ENCODE measurements at regions of chr13 and their contacts with region 1.

Region 1: DNA sequence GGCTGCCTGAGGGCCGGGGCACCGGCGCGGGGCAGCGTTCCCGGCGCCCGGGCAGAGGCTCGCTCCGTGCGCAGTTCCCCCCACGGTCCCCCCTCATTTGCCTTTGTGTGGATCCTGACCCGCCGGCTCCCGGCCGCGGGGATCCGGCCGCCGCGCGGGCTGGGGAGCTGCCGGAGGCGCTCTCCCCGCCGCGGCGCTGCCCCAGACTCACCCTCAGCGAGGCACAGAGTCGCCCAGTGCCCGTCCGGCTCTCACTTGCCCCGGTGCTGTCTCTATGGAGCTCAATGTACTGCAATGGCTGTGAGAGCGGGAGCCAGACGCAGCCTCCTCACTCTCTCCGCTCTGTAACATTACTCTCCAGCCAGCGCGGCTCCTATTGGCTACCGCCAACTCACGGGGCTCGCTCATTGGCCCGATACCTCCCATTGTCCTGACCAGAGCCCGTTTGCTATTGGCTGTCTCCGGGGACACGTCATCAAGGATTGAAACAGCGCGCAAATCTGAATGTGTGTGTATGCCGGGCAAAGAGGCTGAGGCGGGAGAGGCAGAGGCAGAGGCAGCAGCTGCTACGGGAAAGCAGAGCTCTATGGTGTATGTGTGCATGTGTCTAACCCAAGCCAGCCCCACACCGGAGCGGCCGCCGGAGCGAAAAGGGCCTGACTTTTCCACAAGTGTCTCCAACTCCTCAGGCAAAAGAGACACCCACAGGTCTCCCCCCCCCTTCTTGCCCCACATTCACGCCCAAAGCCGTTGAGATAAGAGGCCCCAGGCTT is at the start of gene HMGB1:
- DNase-seq: peak; percentile 99
- H3K4me3 ChIP-seq: peak within 1 kb of the TSS; percentile 51 to 96 (median 90)
- H3K27ac ChIP-seq: peak within 1 kb of the TSS; percentile 99 to 100 (median 100)
- H3K4me1 ChIP-seq: peaks cover 2 to 30% (median 24%) of the 10 kb centered on the region in 4 donors
- H3K27me3 ChIP-seq: no peaks in the 10 kb centered on the region
- CTCF ChIP-seq: no peak
- EP300 ChIP-seq: no peak
- POLR2A ChIP-seq: peak; percentile 98
- total RNA-seq, gene HMGB1: 212 to 492 (median 270) TPM

Region 2: DNA sequence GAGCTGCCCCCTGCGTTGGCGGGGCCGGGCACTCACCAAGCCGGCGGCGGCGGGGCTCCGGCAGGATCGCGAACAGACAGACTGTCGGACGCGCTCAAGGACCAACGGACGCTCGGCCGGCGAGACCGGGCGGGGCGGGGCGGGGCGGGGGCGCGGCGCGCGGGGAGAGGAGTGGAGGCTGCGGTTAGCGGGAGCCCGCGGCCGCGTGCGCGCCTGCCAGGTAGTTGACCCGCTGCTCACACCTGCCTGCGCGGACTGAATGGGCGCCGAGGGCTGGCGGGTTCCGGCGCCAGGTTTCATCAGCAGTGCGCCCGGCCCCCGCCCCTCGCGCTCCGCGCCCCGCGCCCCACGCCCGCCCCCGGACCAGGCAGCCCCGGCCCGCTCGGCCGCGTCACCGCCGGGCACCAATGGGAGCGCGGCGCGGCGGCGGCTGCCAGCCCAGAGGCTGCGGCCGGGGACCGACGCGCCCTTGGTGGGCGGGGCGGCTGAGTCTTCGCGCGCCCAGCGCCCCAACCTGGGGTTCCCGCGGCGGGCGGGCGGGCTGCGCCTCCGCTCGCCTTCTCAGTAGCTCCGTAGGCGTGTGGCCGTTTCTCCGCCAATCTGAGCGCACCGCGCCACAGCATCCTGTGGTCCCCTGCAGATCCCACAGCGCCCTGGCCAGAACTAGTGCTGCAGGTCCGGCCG is 870.2 kb before region 1 on chr13 and contains the start of gene SLC7A1:
- intact Hi-C with region 1: loop called (anchors 10 kb)
- DNase-seq: peak; percentile 90
- H3K4me3 ChIP-seq: peak within 1 kb of the TSS; percentile 66 to 99 (median 75)
- H3K27ac ChIP-seq: peak within 1 kb of the TSS; percentile 90 to 96 (median 93)
- H3K4me1 ChIP-seq: peaks cover 0 to 41% (median 12%) of the 10 kb centered on the region in 4 donors
- H3K27me3 ChIP-seq: no peaks in the 10 kb centered on the region
- CTCF ChIP-seq: no peak
- EP300 ChIP-seq: no peak
- POLR2A ChIP-seq: no peak
- total RNA-seq, gene SLC7A1: 11.8 to 21.3 (median 15.9) TPM

Region 3: DNA sequence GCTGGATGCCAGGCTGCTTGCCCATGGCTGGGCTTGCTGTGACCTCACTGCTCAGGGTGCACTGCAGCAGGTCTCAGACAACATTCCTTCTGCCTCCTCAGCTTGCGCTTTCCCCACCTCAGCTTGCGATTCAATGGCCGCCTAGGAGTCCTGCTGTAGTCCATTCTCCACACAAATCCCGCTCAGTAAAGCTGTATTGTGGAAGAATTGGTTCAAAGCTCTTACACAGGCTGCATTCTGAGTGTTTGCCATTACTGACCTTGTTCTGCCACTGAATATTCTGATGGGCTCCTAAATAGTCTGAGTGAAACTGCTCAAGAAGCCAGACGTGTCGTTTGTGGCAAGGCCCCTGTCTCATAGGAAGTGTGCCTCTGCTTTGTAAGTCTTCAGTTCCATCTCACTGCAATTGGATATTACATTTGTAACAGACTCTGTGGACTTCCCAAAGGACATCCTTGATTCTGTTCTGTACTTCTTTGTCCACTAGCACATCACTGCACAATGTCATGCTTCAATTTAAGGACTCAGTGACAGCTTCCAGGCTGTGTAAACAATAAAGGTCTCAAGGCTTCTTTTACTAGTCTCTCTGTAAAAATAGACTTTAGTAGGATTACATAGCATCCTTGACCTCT is 208.2 kb before region 1 on chr13:
- intact Hi-C with region 1: loop called (anchors 10 kb)
- DNase-seq: no peak
- H3K4me3 ChIP-seq: no peak overlapping the region
- H3K27ac ChIP-seq: peak overlapping the region in 3 of 4 donors; percentile 70 to 76 (median 72)
- H3K4me1 ChIP-seq: peaks cover 0 to 29% (median 15%) of the 10 kb centered on the region in 4 donors
- H3K27me3 ChIP-seq: no peaks in the 10 kb centered on the region
- CTCF ChIP-seq: no peak
- EP300 ChIP-seq: no peak
- POLR2A ChIP-seq: no peak

Region 4: GRCh38 chr13:30408319-30409101 is 57.3 kb before region 1 on chr13:
- intact Hi-C with region 1: loop called (anchors 1 kb)
- DNase-seq: peak; percentile 98
- H3K4me3 ChIP-seq: peak overlapping the region; percentile 2 to 42 (median 32)
- H3K27ac ChIP-seq: peak overlapping the region; percentile 84 to 91 (median 88)
- H3K4me1 ChIP-seq: peaks cover 0 to 23% (median 20%) of the 10 kb centered on the region in 4 donors
- H3K27me3 ChIP-seq: no peaks in the 10 kb centered on the region
- CTCF ChIP-seq: peak; percentile 59 to 90 (median 71)
- EP300 ChIP-seq: peak in 1 of 4 donors; percentile 14
- POLR2A ChIP-seq: no peak

Region 5: GRCh38 chr13:30617315-30618185 is 151.8 kb after region 1 on chr13 and contains the start of gene USPL1:
- intact Hi-C with region 1: loop called (anchors 1 kb)
- DNase-seq: peak; percentile 99
- H3K4me3 ChIP-seq: peak within 1 kb of the TSS; percentile 86 to 94 (median 88)
- H3K27ac ChIP-seq: peak within 1 kb of the TSS; percentile 98 to 100 (median 100)
- H3K4me1 ChIP-seq: peaks cover 0 to 40% (median 24%) of the 10 kb centered on the region in 4 donors
- H3K27me3 ChIP-seq: no peaks in the 10 kb centered on the region
- CTCF ChIP-seq: peak in 2 of 4 experiments; percentile 16 to 38
- EP300 ChIP-seq: peak in 3 of 4 donors; percentile 37 to 93 (median 69)
- POLR2A ChIP-seq: peak; percentile 91 to 93
- total RNA-seq, gene USPL1: 17.4 to 34.6 (median 23.7) TPM

Region 6: DNA sequence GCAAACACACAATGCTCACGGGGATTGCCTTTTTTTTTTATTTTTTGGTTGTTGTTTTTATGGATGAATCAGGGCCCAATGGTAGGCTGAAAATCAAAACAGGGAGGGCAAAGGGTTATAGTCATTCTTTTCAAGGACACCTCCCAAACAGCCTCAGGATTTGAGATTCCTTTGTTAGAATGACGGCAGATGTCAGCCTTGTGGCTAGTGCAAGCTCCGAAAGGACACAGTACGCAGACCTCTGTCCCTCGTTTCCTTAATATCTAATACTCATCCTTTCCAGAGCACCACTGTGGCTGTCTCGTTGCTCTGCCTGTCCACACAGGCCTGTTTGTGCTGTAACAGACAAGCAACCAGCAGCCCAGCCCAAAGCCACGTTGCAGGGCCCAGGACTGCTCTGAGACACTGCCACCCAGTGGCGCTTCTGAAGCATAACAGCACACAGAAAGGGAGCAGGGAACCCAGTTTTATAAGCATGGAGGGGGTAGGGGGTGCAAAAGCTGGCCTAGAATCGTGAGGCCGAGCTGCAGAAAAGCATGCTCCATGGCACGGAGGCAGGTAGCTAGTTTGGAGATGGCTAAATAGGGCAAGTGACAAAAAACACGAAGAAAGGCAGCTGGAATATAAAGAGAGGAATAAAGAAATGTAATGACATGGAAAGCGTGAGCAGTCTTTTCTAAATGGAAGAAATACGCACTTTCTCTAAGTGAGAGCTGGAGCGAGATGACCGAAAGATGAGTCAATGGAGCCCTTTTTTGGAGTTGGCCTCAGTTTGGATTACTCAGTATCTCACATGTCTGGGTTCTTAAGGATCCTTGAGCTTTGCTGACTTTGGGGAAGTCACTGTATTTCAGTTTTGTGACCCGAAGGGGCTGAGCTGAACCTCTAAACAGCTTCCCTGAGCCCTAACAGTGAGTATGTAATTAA is 399.6 kb after region 1 on chr13:
- intact Hi-C with region 1: loop called (anchors 10 kb)
- DNase-seq: peak; percentile 92
- H3K4me3 ChIP-seq: peak overlapping the region in 1 of 4 donors; percentile 17
- H3K27ac ChIP-seq: peak overlapping the region; percentile 73 to 87 (median 86)
- H3K4me1 ChIP-seq: peaks cover 0 to 77% (median 62%) of the 10 kb centered on the region in 4 donors
- H3K27me3 ChIP-seq: no peaks in the 10 kb centered on the region
- CTCF ChIP-seq: peak; percentile 86 to 97 (median 94)
- EP300 ChIP-seq: peak in 1 of 4 donors; percentile 1
- POLR2A ChIP-seq: no peak

Measured in sigmoid colon (tissue), 7 donors.